ENCODE measurements at regions of chr12 and their contacts with region 1.

Region 1: GRCh38 chr12:25130741-25131188 is 64.2 kb downstream of the DNAI7 start:
- DNase-seq: peak in 2 of 9 experiments; percentile 51 to 64
- ATAC-seq: no peak
- H3K4me3 ChIP-seq: no peak overlapping the region
- H3K4me3 Mint-ChIP-seq: no peak overlapping the region
- H3K27ac ChIP-seq: no peak overlapping the region
- H3K27ac Mint-ChIP-seq: no peak overlapping the region
- H3K4me1 ChIP-seq: no peaks in the 10 kb centered on the region
- H3K4me1 Mint-ChIP-seq: no peaks in the 10 kb centered on the region
- H3K27me3 ChIP-seq: no peaks in the 10 kb centered on the region
- H3K27me3 Mint-ChIP-seq: peaks cover 4% of the 10 kb centered on the region
- CTCF ChIP-seq: peak; percentile 86

Region 2: GRCh38 chr12:24852420-24852819 is 278.3 kb before region 1 on chr12:
- CTCF ChIA-PET with region 1: no interaction called
- POLR2A ChIA-PET with region 1: no interaction called
- intact Hi-C with region 1: loop called in 1 of 2 experiments (anchors 5 kb)
- DNase-seq: no peak
- ATAC-seq: no peak
- H3K4me3 ChIP-seq: no peak overlapping the region
- H3K4me3 Mint-ChIP-seq: no peak overlapping the region
- H3K27ac ChIP-seq: no peak overlapping the region
- H3K27ac Mint-ChIP-seq: no peak overlapping the region
- H3K4me1 ChIP-seq: no peaks in the 10 kb centered on the region
- H3K4me1 Mint-ChIP-seq: no peaks in the 10 kb centered on the region
- H3K27me3 ChIP-seq: no peaks in the 10 kb centered on the region
- H3K27me3 Mint-ChIP-seq: peaks cover 8% of the 10 kb centered on the region
- CTCF ChIP-seq: no peak

Region 3: GRCh38 chr12:24991209-24992049 is 139.3 kb before region 1 on chr12:
- CTCF ChIA-PET with region 1: interaction called, 73 read pairs
- POLR2A ChIA-PET with region 1: no interaction called
- intact Hi-C with region 1: loop called (anchors 1 kb)
- DNase-seq: peak in 3 of 9 experiments; percentile 15 to 82 (median 76)
- ATAC-seq: peak; percentile 91
- H3K4me3 ChIP-seq: no peak overlapping the region
- H3K4me3 Mint-ChIP-seq: no peak overlapping the region
- H3K27ac ChIP-seq: no peak overlapping the region
- H3K27ac Mint-ChIP-seq: no peak overlapping the region
- H3K4me1 ChIP-seq: no peaks in the 10 kb centered on the region
- H3K4me1 Mint-ChIP-seq: no peaks in the 10 kb centered on the region
- H3K27me3 ChIP-seq: no peaks in the 10 kb centered on the region
- H3K27me3 Mint-ChIP-seq: no peaks in the 10 kb centered on the region
- CTCF ChIP-seq: peak; percentile 84

Region 4: DNA sequence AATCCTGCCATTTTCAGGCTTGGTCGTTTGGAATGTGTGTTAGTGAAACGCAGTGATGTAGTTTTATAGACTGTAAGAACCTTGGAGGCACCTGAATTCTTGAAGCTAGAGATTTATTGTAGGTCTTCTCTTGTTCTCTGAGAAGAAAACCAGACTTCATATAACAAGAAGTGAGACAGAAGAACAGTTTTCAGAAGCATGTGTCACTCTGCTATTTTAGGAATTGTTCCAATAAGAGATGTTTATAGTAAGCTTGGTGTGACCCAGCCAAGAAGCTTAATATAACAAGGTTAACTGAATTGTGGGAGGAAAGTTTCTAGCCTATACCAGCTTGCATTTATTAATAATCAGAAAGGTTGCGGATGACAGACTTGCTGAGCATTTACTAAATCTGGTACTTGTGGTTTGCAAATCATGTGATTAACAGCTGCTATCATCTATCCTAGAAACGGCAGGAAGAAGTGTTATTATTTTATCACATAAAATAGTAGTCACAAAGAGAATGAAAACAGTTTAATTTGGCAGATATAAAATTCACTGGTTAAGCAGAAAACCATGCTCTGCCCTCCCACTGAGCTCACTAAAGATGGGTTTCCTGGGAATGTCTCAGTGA is 132.7 kb before region 1 on chr12:
- CTCF ChIA-PET with region 1: interaction called, 73 read pairs
- POLR2A ChIA-PET with region 1: interaction called, 3 read pairs
- intact Hi-C with region 1: no loop called
- DNase-seq: peak in 2 of 9 experiments; percentile 11 to 37
- ATAC-seq: peak; percentile 34
- H3K4me3 ChIP-seq: no peak overlapping the region
- H3K4me3 Mint-ChIP-seq: no peak overlapping the region
- H3K27ac ChIP-seq: no peak overlapping the region
- H3K27ac Mint-ChIP-seq: peak overlapping the region; percentile 6
- H3K4me1 ChIP-seq: no peaks in the 10 kb centered on the region
- H3K4me1 Mint-ChIP-seq: peaks cover 10% of the 10 kb centered on the region
- H3K27me3 ChIP-seq: no peaks in the 10 kb centered on the region
- H3K27me3 Mint-ChIP-seq: no peaks in the 10 kb centered on the region
- CTCF ChIP-seq: no peak

Region 5: GRCh38 chr12:25151476-25151875 is 20.7 kb after region 1 on chr12:
- CTCF ChIA-PET with region 1: interaction called, 10 read pairs
- POLR2A ChIA-PET with region 1: no interaction called
- intact Hi-C with region 1: no loop called
- DNase-seq: no peak
- ATAC-seq: no peak
- H3K4me3 ChIP-seq: no peak overlapping the region
- H3K4me3 Mint-ChIP-seq: no peak overlapping the region
- H3K27ac ChIP-seq: no peak overlapping the region
- H3K27ac Mint-ChIP-seq: no peak overlapping the region
- H3K4me1 ChIP-seq: peaks cover 4% of the 10 kb centered on the region
- H3K4me1 Mint-ChIP-seq: peaks cover 5% of the 10 kb centered on the region
- H3K27me3 ChIP-seq: no peaks in the 10 kb centered on the region
- H3K27me3 Mint-ChIP-seq: no peaks in the 10 kb centered on the region
- CTCF ChIP-seq: no peak